ENCODE measurements at regions of chr6 and their contacts with region 1.

Region 1: DNA sequence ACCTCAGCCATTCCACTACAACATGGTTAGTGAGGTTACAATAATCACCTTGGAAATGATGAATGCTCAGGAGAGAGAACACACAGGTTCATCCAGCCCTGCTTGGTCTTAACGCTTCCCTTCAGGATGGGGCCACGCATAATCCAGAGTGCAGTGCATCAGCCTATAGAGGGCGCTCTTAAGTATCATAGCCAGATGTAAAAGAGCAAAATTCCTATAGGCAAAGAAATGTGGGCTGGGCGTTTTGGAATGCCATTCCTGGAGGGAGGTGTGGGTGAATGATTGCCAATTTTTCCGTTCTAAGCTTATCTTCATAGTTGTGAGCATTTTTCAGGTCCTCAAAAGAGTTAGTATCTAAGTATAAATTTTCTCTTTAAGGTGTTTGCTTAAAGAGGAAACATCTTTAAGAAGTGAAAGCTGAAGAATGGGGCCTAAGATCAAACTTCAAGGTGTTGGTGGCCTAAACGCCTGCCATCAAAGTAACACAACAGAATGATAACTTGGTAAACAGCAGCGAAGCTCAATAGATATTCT is 1.8 kb downstream of the RIPOR2 start:
- DNase-seq: peak; percentile 66
- ATAC-seq: peak; percentile 12
- H3K4me3 Mint-ChIP-seq: peak overlapping the region; percentile 95
- H3K27ac Mint-ChIP-seq: peak overlapping the region; percentile 97
- H3K4me1 Mint-ChIP-seq: peaks cover 87% of the 10 kb centered on the region
- H3K27me3 Mint-ChIP-seq: no peaks in the 10 kb centered on the region

Region 2: DNA sequence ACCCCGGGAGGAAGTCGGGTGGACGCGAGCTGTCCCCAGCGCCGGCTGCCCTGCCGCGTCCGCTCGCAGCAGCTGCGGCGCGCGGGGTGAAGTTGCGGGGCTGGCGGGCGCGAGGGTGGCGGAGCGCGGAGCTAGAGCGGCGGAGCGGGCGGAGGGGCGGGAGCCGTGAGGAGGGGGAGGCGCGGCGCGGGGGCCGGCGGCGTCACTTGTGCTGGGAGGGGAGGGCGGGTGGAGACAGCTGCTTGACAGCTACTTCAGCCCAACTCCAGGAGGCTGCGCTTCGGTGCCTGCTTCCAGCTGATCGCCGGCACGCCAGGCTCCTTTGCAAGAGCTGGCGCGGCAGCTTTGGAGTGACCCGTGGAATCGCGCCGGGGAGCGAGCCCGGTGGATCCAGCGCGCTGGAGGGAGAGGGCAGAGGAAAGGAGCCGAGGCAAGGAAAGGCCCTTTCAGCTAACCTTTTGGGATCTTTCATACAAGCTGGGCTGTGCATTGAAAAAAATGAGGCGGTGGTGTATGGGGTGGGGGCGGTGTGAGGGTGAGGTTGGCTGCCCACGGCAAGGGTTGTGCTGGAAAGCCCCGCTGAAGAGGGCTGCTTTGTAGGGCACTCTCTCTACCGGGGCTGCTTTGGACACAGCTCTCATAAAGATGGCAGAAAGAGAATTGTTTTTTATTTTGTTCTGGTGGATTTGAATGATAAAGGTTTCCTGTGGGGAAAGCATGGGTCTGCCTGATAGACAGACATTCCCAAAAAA is 22.8 kb before region 1 on chr6:
- CTCF ChIA-PET with region 1: interaction called, 72 read pairs
- DNase-seq: peak; percentile 60
- ATAC-seq: peak; percentile 59
- H3K4me3 Mint-ChIP-seq: peak overlapping the region; percentile 79
- H3K27ac Mint-ChIP-seq: peak overlapping the region; percentile 75
- H3K4me1 Mint-ChIP-seq: peaks cover 74% of the 10 kb centered on the region
- H3K27me3 Mint-ChIP-seq: no peaks in the 10 kb centered on the region

Region 3: GRCh38 chr6:24949020-24949569 is 15.2 kb after region 1 on chr6:
- CTCF ChIA-PET with region 1: interaction called, 108 read pairs
- DNase-seq: peak; percentile 86
- ATAC-seq: peak; percentile 69
- H3K4me3 Mint-ChIP-seq: peak overlapping the region; percentile 46
- H3K27ac Mint-ChIP-seq: peak overlapping the region; percentile 96
- H3K4me1 Mint-ChIP-seq: peaks cover 66% of the 10 kb centered on the region
- H3K27me3 Mint-ChIP-seq: no peaks in the 10 kb centered on the region

Region 4: GRCh38 chr6:25006565-25007001 is 72.6 kb after region 1 on chr6:
- CTCF ChIA-PET with region 1: interaction called, 26 read pairs
- DNase-seq: peak; percentile 85
- ATAC-seq: peak; percentile 79
- H3K4me3 Mint-ChIP-seq: peak overlapping the region; percentile 38
- H3K27ac Mint-ChIP-seq: peak overlapping the region; percentile 96
- H3K4me1 Mint-ChIP-seq: peaks cover 66% of the 10 kb centered on the region
- H3K27me3 Mint-ChIP-seq: no peaks in the 10 kb centered on the region

Region 5: DNA sequence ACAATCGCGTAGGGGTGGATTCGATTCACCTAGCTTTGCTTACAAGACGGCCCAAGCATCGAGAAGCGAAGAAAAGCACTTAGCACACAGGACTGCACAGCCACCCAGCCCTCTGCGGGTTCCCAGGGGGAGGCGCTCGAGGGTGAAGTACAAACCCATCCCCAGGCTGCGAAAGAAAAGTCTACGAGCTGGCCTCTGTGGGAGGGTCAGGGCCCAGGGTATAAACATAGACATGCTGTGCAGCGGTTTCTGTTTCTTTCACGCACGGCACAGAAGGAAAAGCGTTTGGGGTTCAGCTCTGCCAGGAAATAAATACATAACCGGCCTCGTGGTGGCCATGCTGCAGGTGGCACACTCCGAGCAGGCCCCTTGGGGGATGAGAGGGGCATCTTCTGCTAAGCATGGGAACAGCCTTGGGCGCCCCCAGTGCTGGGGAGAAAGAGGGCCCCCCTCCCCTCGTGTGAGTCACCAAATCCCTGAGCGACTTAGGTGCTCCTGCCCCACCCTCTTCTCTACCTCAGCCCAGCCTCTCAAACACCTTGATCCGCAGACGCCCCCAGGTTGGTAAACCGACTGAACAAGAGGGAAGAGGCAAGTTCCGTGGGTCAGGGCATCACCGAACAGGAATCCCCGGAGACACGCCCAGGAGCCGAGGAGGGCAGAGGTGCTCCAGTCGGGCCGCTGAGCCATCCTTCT is 93.4 kb after region 1 on chr6:
- CTCF ChIA-PET with region 1: interaction called, 23 read pairs
- DNase-seq: peak; percentile 90
- ATAC-seq: peak; percentile 97
- H3K4me3 Mint-ChIP-seq: peak overlapping the region; percentile 56
- H3K27ac Mint-ChIP-seq: peak overlapping the region; percentile 73
- H3K4me1 Mint-ChIP-seq: peaks cover 37% of the 10 kb centered on the region
- H3K27me3 Mint-ChIP-seq: no peaks in the 10 kb centered on the region